ENCODE measurements at regions of chr12 and their contacts with region 1.

Region 1: GRCh38 chr12:52082988-52083637 is 3.6 kb downstream of the SMIM41 start:
- DNase-seq: peak; percentile 65
- ATAC-seq: peak; percentile 50 to 56

Region 2: DNA sequence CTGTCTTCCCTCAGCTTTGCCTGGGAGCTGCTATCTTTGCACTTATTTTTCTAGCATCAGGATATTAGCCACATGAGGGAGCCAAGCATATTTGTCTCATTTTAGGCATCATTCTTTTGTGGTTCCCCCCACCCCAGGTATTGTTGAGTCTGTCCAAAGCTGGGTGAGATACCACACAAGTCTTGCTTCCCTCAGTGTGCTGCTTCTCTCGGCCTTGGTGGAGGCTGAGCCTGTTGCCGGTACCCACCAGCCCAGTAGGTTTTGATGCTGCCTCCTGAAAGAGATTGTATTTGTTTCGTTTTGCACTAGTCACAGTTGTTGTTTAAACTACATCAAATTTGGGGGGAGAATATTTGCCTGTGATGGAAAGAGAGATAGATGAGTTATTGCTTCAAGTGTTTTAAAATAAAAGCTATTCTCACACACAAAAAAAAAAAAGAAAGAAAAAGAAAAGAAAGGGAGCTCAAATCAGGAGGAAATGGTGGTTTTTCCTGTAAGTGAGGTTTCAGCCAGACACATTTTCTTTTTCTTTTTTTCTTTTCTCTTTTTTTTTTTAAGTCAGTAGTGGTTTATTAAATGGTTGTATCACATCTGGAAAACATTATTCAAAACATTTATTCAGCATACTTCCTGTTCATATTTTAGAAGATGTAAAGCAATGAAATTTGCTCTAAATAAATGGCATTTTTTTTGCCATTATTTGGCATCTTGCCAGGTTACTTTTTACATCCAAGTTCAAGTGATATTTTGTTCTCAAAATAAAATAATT is 600.0 kb before region 1 on chr12:
- intact Hi-C with region 1: no loop called
- DNase-seq: no peak
- ATAC-seq: no peak

Region 3: DNA sequence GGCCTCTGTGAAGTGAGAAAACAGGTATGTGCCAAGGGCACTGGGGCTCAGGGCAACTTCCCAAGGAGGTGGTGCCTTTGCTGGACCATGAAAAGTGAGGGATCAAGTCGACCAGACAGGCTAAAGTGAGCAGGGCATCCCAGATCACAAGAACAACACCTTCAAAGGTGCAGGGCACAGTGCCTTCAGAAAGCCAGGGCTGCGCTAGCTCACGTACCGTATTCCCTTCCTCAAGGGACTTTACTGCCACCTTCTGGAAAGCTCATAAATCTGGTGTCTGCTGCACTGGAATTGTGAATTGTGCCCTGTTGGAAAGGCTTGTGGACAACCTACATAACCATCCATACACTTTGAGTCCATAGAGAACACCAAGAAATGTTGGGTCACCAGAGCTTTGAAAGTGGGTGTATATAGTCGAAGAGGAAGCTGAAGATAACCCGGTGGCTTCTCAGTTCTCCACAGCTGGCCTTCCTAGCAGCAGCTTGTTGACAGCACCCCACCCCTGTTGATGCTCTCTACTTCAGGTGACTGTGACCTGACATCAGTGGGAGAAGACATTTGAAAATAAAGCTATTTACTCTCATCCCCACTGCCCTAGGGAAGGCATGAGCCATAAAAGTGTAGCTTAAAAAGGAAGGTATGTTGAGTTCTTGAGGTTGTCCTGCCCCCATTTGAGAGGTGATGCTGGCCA is 259.1 kb before region 1 on chr12:
- intact Hi-C with region 1: no loop called
- DNase-seq: no peak
- ATAC-seq: peak in 1 of 2 donors; percentile 7

Region 4: DNA sequence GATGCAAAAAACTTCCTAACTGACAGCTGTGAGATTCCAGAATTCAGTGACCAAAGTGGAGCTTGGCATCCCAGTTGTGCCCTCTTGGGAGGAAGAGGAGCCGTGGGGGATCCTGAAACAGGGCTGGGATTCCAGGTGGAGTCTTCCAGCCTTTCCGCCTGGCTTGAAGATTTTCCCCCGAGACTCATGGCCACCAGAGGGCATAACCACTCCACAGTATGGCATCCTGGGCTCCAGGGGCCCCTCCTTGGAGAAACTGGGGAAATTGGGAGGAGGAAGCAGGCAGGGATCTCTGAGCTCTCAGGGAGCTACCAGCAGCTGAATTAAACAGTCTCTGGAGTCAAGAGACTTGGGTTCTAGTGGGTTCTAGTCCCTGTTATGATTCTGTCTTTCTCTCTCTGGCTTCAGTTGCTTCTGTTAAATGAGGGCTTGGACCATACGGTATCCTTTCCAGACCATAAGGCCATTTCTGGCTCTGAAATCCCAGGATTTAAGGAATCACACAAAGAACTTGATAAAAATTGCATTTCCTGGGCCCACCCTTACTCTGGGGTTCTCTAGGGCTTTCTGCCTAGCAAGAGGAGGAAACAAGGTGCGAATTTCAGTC is 79.0 kb before region 1 on chr12:
- intact Hi-C with region 1: loop called in 1 of 2 experiments (anchors 5 kb)
- DNase-seq: peak; percentile 68
- ATAC-seq: peak in 1 of 2 donors; percentile 3

Region 5: DNA sequence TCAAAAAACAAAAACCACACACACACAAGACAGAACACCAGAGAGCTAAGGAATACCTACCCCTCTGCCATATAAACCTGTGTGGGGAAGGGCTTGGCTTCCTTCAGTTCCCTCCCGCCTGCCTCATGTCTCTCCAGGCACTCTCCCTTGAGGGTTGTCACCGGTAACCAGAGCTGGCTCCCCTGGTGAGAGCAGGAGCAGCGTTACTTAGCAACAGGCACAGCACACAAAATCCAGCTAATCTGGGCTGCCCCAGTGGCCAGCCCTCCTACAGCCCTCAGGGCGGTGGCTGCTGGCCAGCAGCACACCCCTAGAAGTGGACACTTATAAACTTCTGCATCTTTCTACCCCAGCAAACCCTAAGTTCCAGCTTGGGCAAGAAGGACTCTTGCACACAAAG is 53.4 kb before region 1 on chr12:
- intact Hi-C with region 1: loop called (anchors 1 to 2 kb)
- DNase-seq: no peak
- ATAC-seq: no peak

Region 6: DNA sequence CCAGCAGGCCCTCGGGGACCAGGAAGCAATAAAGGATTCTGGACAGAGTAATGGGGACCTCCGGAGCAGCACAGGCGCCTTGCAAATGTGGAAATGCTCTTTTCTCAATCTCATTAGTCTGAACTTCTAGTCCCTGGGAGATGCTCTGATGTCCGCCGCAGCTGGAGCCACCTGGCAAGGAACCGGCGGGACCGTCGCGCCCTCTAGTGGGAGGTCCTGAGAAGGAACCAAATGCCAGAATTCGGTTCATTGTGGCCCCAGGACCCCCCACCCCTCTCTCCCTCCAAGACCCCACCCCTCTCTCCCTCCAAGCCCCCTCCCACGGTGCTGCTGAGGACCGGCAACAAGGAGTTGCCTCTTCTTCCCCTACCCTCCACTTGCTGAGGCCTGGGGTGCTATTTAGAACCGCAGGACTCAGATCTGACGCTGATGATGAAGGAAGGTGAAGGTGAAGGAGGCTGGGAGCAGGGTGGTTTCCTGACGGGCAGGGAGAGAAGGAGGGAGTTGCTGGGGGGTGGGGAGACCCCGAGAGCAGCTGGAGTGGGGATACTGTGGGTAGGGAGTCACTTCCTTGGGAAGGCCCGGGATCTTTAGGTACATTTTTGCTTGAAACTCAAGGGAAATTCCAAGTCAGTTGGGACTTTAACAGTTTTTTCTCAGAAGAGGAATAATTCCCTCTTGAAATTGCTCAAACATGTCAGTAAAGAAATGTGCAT is 38.9 kb after region 1 on chr12:
- intact Hi-C with region 1: loop called in 1 of 2 experiments (anchors 5 kb)
- DNase-seq: peak; percentile 72
- ATAC-seq: peak; percentile 28 to 45

Region 7: GRCh38 chr12:52221912-52222457 is 138.9 kb after region 1 on chr12:
- intact Hi-C with region 1: no loop called
- DNase-seq: peak; percentile 61
- ATAC-seq: peak; percentile 5 to 58

Measured in left cardiac atrium (tissue), 4 donors.